ENCODE measurements at regions of chr1 and their contacts with region 1.

Region 1: GRCh38 chr1:110495926-110496600 is 22.9 kb downstream of the KCNA10 start:
- DNase-seq: peak; percentile 19
- H3K4me3 ChIP-seq: no peak overlapping the region
- H3K27me3 ChIP-seq: peaks cover 10% of the 10 kb centered on the region
- CTCF ChIP-seq: peak; percentile 95

Region 2: DNA sequence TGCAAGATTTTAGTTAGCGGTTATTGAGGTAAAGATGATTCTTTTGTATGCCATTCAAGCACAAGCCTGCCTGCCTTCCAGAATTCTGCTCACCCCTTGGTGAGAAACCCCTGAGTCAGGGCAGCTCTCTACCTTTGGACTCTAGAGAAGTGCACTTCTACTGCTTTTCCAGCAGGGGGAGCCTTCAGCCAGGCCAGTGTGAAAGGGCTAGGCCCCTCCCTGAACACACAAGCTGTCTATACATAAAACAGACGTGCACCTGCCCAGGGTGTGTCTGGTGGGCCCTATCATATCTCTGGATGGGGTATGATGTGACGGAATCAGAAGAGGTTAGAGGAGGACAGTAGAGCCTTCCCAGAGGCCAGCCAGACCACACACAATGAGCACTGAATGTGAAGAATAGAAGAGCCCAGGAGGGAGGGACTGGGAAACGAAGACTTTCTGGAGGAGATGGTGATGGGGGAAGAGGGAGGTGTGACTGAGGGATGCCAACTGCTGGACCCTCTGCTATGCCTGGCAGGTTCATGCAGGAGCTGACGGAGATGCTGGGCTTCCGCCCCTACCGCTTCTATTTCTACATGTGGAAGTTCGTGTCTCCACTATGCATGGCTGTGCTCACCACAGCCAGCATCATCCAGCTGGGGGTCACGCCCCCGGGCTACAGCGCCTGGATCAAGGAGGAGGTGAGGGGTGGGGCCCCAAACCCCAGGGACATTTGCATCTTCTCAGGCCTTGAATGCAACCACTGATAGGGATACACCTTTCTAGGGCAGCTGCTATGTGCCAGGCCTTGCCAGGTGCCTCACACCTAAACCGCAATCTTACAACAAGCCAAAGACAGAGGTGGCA is 298.9 kb before region 1 on chr1:
- CTCF ChIA-PET with region 1: interaction called, 101 read pairs
- POLR2A ChIA-PET with region 1: no interaction called
- DNase-seq: no peak
- H3K4me3 ChIP-seq: no peak overlapping the region
- H3K27me3 ChIP-seq: no peaks in the 10 kb centered on the region
- CTCF ChIP-seq: peak; percentile 98

Region 3: DNA sequence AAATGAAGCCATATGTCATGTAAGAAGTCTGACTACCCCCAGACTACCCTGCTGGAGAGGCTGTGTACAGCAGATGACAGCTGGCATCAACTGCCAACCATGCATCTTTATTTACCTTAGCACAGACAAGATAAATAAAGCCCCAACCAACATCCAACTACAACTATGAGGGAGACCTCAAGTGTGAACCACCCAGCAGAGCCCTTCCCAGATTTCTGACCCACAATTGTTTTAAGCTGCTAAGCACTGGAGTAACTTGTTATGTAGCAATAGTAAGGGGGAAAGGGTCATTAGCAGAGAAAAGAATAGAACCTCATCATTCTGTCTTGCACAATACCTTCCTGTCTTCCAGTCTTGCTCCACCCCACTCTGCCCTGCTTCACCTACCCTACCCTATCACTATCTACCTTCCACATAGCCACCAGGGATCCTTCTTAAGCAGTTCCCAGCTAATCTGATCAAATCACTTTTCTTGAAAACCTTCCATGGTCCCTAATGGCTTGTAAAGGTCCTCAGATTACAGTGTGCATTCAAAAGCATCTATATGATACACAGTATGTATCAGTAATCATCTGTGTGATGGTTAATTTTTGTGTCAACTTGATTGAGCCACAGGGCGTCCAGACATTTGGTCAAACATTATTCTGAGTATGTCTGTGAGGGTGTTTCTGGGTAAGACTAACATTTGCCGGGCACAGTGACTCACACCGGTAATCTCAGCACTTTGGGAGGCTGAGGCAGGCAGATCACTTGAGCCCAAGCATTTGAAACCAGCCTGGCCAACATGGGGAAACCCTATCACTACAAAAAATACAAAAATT is 176.5 kb before region 1 on chr1:
- CTCF ChIA-PET with region 1: interaction called, 12 read pairs
- POLR2A ChIA-PET with region 1: no interaction called
- DNase-seq: no peak
- H3K4me3 ChIP-seq: no peak overlapping the region
- H3K27me3 ChIP-seq: no peaks in the 10 kb centered on the region
- CTCF ChIP-seq: no peak

Region 4: GRCh38 chr1:110407260-110408210 is 88.5 kb before region 1 on chr1 and contains the start of gene LAMTOR5:
- CTCF ChIA-PET with region 1: interaction called, 131 read pairs
- POLR2A ChIA-PET with region 1: interaction called, 5 read pairs
- DNase-seq: peak; percentile 68
- H3K4me3 ChIP-seq: peak within 1 kb of the TSS; percentile 99
- H3K27me3 ChIP-seq: no peaks in the 10 kb centered on the region
- CTCF ChIP-seq: no peak
- polyA plus RNA-seq, gene LAMTOR5: 236 and 261 TPM in 2 replicates

Region 5: DNA sequence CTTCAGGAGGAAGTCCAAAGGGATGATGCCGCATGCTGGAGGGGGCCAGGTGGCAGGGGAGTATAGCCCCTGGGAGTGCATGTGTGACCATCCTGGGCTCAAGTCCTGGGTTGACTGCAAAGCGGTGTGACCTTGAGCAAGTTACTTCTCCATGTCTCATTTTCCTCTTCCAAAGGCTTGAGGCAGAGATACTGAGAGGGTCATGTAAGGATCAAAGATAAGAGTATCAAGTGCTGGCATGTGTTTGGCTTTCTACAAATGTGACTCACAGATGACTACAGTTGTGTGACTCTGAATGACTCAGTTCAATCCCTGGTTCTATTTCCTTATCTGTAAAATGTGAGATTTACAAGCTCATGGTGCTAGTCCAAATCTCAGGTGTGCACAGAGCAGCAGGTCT is 19.0 kb before region 1 on chr1:
- CTCF ChIA-PET with region 1: interaction called, 68 read pairs
- POLR2A ChIA-PET with region 1: no interaction called
- DNase-seq: peak; percentile 22
- H3K4me3 ChIP-seq: no peak overlapping the region
- H3K27me3 ChIP-seq: peaks cover 6% of the 10 kb centered on the region
- CTCF ChIP-seq: no peak

Region 6: DNA sequence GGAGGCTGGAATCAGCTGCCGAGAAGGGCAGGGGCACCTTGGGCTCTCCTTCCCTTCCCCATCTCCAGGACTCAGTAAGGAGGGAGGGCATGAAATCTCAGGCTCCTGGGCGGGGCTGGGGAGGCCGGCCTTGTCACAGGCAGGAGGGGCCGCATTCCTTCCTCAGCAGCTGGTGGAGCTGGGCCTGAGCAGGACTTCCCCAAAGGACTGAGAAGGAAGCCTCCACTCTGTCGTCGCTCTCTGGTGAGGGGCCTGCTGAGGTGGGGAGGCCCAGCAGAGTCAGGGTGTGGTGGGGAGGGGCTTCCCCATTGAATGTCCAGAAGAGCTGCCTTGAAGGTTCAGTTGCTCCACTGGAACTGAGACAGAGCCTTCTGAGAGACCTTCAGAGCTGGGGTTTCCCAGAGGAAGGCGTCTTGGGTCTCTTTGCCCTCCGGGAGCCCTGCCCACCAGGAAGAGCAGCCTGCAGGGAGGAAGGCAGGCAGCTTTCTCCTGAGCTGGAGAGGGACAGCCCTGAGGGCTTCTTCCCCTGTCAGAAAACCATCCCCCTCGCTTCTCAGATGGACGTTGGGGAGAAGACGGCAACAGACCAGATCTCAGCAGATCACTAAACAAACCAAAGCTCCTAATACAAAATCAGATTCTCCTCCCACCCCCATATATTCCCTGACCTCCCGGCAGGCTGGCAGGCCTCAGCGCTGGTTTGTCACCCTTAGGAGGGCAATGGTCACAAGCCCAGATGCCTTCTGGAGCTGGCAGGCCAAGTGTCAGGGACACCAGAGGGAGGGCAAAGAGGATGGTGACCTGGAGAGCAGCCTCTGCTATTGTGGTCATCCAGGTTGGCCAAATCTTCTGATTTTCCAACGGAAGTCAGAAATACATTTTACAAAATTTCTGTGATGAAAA is 12.2 kb after region 1 on chr1:
- CTCF ChIA-PET with region 1: interaction called, 21 read pairs
- POLR2A ChIA-PET with region 1: no interaction called
- DNase-seq: no peak
- H3K4me3 ChIP-seq: no peak overlapping the region
- H3K27me3 ChIP-seq: peaks cover 6% of the 10 kb centered on the region
- CTCF ChIP-seq: no peak

Region 7: GRCh38 chr1:110726755-110727154 is 230.7 kb after region 1 on chr1:
- CTCF ChIA-PET with region 1: no interaction called
- POLR2A ChIA-PET with region 1: no interaction called
- DNase-seq: no peak
- H3K4me3 ChIP-seq: no peak overlapping the region
- H3K27me3 ChIP-seq: no peaks in the 10 kb centered on the region; the same call in 1 of the 2 replicates
- CTCF ChIP-seq: no peak

Measured in BJ (cell line).